Cardiac septum (tissue), 1 donor: ENCODE measurements at regions of chr1 and their contacts with region 1.

Region 1: DNA sequence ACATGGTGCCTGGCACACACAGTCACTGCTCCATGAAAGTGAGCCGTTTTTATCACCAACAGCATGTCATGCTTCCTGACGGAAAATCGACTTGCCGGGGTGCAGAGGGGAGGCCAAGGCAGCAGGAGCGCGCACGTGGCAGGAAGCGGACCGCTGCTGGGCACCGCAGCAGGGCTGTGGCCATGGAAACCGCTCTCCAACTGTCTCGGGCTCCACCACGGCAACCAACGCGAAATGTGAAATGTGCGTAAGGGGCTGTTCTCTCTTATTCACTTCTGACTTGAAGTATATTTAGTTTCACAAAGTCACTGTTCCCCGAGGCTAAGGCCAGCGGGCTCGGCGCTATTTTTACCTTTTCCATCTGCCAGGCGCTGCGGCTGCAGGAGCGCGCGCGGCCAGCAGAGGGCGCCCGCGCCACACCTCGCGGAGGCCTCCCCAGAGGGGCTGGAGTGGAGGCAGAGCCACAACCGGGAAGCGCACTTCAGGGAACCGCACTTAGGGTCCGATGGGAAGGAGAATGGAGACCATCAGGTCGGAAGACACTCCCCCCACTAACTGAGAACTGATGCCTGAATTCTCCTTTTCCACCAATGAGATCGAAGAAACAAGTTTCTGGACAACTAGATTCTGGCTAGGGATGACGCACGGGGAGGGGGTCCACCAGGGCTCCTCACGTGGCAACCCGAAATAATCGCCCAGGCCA is 19.7 kb downstream of the RCC2 start:
- DNase-seq: peak; percentile 81

Region 2: DNA sequence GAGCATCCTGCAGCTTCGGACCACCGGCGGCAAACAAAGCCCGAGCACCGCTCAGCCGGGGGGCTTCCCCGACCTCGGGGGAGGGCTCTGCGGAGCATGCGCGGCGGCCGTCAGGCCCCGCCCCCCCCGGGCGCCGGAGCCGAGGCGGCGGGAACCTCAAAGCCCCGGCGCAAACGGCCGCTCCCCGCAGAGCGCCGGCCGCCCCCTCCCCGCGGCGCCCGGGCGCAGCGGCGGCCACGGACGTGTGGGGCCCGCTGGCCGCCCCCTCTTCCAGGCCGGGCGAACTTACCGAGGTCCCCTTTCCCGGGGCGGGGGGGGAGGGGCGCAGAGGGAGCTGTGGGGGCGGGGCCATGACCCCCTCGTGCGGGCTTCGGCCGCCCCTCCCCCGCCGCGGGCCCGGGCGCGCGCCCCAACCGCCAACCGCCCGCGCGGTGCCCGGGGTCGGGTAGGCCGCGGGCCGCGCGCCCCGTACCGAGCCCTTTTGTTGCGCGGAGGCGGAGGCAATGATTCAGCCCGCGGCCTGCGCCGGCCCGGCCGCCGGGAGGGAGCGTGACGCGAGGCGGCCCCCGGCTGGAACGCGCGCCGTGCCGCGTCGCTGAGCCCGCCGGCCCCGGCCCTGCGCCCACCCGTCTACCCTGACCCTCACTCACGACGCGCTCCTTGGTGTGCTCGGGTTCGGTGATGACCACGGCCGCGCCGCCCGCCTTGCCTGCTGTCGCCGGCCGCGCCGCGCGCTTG is 18.0 kb after region 1 on chr1:
- intact Hi-C with region 1: loop called (anchors 1 kb)
- DNase-seq: no peak

Region 3: DNA sequence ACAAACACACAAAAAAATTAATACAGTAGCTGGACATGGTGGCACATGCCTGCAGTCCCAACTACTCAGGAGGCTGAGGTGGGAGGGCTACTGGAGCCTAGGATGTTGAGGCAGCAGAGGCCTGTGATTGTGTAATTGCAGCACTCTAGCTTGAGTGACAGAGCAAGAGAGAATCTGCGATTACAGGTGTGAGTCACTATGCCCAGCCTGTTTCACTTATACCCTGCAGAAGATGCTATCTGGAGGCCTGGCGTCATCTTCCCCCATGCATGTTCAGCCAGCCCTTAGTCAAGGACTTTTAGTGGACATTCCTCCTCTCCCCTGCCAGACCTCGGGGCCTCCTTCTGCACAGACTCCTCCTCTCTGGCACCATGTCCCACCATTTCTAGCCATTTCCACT is 56.0 kb after region 1 on chr1:
- intact Hi-C with region 1: loop called (anchors 5 kb)
- DNase-seq: no peak

Region 4: GRCh38 chr1:17551755-17552234 is 132.0 kb after region 1 on chr1:
- intact Hi-C with region 1: no loop called
- DNase-seq: no peak

Region 5: GRCh38 chr1:17606826-17607440 is 187.2 kb after region 1 on chr1:
- intact Hi-C with region 1: loop called (anchors 10 kb)
- DNase-seq: peak; percentile 83